Psoas muscle (tissue), 8 donors: ENCODE measurements at regions of chr20 and their contacts with region 1.

Region 1: DNA sequence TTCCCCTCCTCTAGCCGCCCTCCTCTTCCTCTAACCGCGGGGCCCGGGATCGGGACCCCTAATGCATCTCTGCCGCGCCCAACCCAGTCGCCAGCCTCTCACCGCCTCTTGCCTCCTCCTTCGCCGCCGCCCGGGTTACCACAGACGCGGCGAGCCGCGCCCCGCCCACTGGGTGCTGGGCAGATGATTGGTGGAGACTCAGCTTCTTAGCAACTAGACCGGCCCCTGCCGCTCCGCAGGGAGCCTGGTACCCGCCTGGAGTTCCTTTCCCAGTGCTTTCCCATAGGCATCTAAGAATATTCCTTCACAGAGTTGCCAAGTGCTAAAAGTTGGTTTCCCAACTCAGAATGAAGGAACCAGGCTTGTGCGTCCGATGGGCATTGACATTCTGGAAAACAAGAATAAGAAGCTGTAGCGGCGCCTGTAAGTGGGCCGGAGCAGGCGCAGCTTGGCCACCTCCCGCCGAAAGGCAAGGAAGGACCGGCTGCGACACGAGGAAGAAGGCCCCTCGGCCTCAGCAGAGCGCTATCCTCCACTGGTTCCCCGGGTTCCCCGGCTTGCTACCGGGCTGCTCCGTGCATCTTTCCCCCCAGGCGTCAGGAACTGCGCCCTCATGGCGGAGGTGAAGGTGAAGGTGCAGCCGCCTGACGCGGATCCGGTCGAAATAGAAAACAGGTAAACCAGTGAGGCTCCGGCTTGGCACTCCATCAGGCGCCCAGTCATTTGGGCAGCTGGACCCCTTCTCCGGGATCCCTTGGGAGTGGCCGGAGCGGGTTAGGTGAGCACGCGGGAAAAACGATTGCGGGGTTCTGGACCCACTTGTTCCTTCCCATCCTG is at the starts of genes DZANK1 and POLR3F:
- DNase-seq: peak; percentile 97
- ATAC-seq: peak; percentile 100
- H3K4me3 ChIP-seq: peak within 1 kb of the TSS; percentile 98
- H3K27ac ChIP-seq: peak within 1 kb of the TSS; percentile 92
- H3K4me1 ChIP-seq: peaks cover 13% of the 10 kb centered on the region
- H3K27me3 ChIP-seq: no peaks in the 10 kb centered on the region
- CTCF ChIP-seq: no peak
- total RNA-seq, gene DZANK1: 0.25 to 0.71 (median 0.43) TPM
- total RNA-seq, gene POLR3F: 3.2 to 8.4 (median 6.6) TPM

Region 2: DNA sequence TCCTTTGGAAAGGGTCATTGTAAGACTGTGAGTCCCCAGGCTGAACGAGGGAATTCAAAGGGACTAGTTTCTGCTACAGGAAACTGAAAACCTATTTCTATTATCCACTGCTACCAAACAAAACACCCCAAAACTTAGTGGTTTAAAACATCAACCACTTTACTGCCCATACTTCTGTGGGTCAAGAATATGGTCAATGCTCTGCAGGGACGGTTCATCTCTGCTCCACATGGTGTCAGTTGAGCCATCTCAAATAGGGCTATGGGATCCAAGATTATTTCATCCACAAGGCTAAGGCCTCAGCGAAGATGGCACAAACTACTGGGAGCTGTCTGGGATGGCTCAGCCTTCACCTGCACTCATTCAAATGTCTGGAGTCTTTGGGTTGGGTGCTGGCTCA is 65.8 kb before region 1 on chr20:
- intact Hi-C with region 1: no loop called
- DNase-seq: no peak
- ATAC-seq: no peak
- H3K4me3 ChIP-seq: no peak overlapping the region
- H3K27ac ChIP-seq: no peak overlapping the region
- H3K4me1 ChIP-seq: peaks cover 6% of the 10 kb centered on the region
- H3K27me3 ChIP-seq: no peaks in the 10 kb centered on the region
- CTCF ChIP-seq: no peak

Region 3: DNA sequence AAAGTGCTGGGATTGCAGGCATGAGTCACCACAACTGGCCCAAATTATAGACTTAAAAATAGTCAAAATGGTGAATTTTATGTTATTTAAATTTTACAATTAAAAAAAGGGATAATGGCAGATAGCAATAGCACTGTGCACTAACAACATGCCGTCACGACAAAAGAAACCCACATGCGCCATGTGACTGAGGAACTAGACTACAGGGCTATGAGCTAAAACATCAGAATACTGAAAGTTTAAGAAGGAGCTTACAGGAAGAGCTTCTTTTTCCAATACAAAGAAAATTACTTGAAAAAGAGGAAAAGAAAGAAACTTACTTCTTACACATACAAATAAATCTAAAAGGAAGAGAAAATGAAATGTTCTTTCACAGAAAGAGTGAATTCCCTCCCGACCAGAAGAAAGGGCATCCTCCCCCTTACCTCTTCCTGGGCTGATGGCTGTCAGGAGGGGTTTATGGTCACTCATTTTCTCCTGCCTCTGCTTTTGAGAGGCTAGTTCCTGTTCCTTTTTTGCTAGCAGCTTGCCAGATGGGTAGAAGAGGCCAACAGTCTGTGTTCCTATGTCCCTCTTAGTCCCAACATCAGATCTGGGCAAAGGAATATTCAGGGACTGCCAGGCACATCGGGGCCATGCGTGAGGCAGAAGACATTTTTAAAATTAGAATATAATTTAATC is 54.8 kb before region 1 on chr20:
- intact Hi-C with region 1: no loop called
- DNase-seq: no peak
- ATAC-seq: no peak
- H3K4me3 ChIP-seq: no peak overlapping the region
- H3K27ac ChIP-seq: no peak overlapping the region
- H3K4me1 ChIP-seq: no peaks in the 10 kb centered on the region
- H3K27me3 ChIP-seq: no peaks in the 10 kb centered on the region
- CTCF ChIP-seq: no peak

Region 4: GRCh38 chr20:18507218-18508021 is 40.3 kb after region 1 on chr20 and contains the start of gene SEC23B:
- intact Hi-C with region 1: loop called (anchors 5 kb)
- DNase-seq: peak; percentile 97
- ATAC-seq: peak; percentile 98 to 99 (median 98)
- H3K4me3 ChIP-seq: peak within 1 kb of the TSS; percentile 95
- H3K27ac ChIP-seq: peak within 1 kb of the TSS; percentile 98
- H3K4me1 ChIP-seq: peaks cover 11% of the 10 kb centered on the region
- H3K27me3 ChIP-seq: no peaks in the 10 kb centered on the region
- CTCF ChIP-seq: no peak
- total RNA-seq, gene SEC23B: 6.1 to 9.5 (median 7.8) TPM